T-cell (primary cell): ENCODE measurements at regions of chr13 and their contacts with region 1.

Region 1: GRCh38 chr13:32676242-32676641 is 90.0 kb downstream of the PDS5B start:
- DNase-seq: no peak
- ATAC-seq: no peak
- H3K4me3 ChIP-seq: no peak overlapping the region
- H3K4me3 Mint-ChIP-seq: no peak overlapping the region
- H3K27ac ChIP-seq: no peak overlapping the region
- H3K27ac Mint-ChIP-seq: peak overlapping the region in 1 of 2 donors; percentile 8
- H3K4me1 ChIP-seq: no peaks in the 10 kb centered on the region
- H3K4me1 Mint-ChIP-seq: no peaks in the 10 kb centered on the region
- H3K27me3 ChIP-seq: no peaks in the 10 kb centered on the region
- H3K27me3 Mint-ChIP-seq: no peaks in the 10 kb centered on the region

Region 2: DNA sequence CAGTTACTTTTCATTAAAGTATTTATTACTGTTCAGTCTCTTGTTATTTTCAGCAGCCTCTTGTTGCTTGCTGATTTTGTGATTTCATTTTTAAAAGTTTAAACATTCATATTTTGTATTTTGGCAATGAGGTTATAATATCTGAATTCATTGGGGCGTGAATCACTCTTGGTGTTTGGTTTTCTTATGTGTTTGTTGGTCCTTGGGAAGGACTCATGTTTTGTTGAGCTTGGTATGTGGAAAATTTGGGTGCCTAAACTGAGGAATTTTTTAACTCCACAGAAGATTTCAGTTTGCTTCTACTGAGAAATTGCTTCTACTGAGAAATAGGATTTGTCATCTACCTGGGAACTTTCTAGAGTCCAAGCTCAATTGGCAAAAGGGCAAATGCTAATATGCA is 51.8 kb before region 1 on chr13:
- CTCF ChIA-PET with region 1: no interaction called
- POLR2A ChIA-PET with region 1: interaction called in 1 of 2 experiments, 18 read pairs
- DNase-seq: no peak
- ATAC-seq: no peak
- H3K4me3 ChIP-seq: no peak overlapping the region
- H3K4me3 Mint-ChIP-seq: no peak overlapping the region
- H3K27ac ChIP-seq: no peak overlapping the region
- H3K27ac Mint-ChIP-seq: no peak overlapping the region
- H3K4me1 ChIP-seq: peaks cover 0 to 3% of the 10 kb centered on the region in 2 experiments
- H3K4me1 Mint-ChIP-seq: peaks cover 42 to 57% (median 52%) of the 10 kb centered on the region in 3 donors
- H3K27me3 ChIP-seq: no peaks in the 10 kb centered on the region
- H3K27me3 Mint-ChIP-seq: no peaks in the 10 kb centered on the region